Natural killer cell (primary cell): ENCODE measurements at regions of chr19 and their contacts with region 1.

Region 1: DNA sequence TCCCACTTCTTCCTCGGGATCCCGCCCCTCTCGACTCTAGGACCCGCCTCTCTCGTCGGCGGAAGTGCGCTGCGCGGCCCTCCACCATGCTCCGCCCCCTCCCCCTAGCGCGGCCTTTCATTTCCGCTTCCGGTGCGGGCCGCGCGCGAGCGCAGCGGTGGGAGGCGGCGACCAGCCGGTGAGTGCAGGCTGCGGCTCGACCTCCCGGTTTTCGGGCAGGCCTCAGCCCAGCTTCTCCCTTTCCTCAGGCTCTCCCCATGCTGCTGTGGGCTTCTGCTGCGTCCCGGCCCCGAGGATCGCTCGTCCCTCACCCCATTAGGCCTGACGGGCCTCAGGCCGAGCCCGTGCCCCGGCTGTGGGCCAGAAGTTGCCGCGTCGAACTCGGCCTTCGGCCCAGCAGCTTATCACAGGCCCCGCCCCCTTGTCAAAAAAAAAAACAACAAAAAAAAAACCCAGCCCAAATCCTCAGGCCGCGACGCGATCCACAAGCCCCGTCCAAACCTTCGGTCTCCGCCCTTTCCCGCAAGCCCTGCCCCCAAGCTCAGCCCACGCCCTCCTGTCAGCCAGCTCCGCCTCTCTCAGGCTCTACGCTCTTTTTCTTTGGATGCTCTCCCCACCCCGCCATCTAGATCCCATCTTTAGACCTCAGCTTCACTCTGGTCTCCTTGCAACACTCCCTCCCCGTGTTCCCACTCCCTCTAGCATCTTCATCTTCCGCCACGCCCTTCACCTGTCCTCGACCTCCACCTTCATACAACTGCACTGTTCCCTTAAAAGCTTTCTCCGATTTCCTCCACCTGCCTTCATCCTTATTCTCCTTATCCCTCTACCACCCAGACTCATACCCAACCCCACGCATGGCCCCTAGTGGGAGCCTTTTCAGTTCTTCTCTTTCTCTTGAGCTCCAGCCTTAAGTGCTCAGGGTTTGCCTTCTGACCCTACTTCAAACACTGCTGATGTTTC is at the start of gene CLASRP:
- DNase-seq: peak; percentile 89 to 95
- ATAC-seq: peak; percentile 92 to 97 (median 93)
- H3K4me3 ChIP-seq: peak within 1 kb of the TSS; percentile 89
- H3K4me3 Mint-ChIP-seq: peak within 1 kb of the TSS; percentile 95
- H3K27ac ChIP-seq: peak within 1 kb of the TSS; percentile 91
- H3K27ac Mint-ChIP-seq: peak within 1 kb of the TSS; percentile 93 to 95
- H3K4me1 ChIP-seq: peaks cover 38% of the 10 kb centered on the region
- H3K4me1 Mint-ChIP-seq: peaks cover 31 to 36% of the 10 kb centered on the region in 2 donors
- H3K27me3 ChIP-seq: no peaks in the 10 kb centered on the region
- H3K27me3 Mint-ChIP-seq: no peaks in the 10 kb centered on the region
- CTCF ChIP-seq: no peak
- total RNA-seq, gene CLASRP: 142 to 160 (median 146) TPM

Region 2: DNA sequence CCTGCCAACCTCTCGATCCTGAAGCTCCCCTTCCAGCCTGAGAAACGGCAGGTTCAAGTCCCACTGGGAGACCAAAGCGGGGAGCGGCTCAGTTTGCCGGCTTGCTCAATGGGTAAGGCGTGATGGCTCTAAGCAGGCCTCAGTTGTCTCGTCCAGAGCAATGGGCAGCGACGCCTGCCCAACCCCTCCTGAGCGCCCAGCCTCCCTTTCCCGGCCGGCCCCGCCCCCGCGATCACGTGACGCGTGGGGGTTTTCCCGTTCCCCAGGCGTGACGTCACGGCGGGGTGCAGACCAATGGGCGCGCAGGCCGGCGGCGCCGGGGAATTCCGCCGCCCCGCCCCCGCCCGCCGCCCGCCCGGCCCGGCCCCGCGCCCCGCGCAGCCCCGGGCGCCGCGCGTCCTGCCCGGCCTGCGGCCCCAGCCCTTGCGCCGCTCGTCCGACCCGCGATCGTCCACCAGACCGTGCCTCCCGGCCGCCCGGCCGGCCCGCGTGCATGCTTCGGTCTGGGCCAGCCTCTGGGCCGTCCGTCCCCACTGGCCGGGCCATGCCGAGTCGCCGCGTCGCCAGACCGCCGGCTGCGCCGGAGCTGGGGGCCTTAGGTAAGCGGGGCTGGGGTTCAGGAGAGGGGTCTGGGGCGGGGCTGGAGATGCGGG is 38.0 kb before region 1 on chr19 and contains the start of gene RELB:
- intact Hi-C with region 1: loop called (anchors 5 kb)
- DNase-seq: peak; percentile 98 to 99
- ATAC-seq: peak; percentile 56 to 83 (median 69)
- H3K4me3 ChIP-seq: peak within 1 kb of the TSS; percentile 92
- H3K4me3 Mint-ChIP-seq: peak within 1 kb of the TSS; percentile 98
- H3K27ac ChIP-seq: peak within 1 kb of the TSS; percentile 100
- H3K27ac Mint-ChIP-seq: peak within 1 kb of the TSS; percentile 97 to 98
- H3K4me1 ChIP-seq: peaks cover 15% of the 10 kb centered on the region
- H3K4me1 Mint-ChIP-seq: peaks cover 9 to 11% of the 10 kb centered on the region in 2 donors
- H3K27me3 ChIP-seq: no peaks in the 10 kb centered on the region
- H3K27me3 Mint-ChIP-seq: no peaks in the 10 kb centered on the region
- CTCF ChIP-seq: no peak
- total RNA-seq, gene RELB: 92.4 to 119 (median 105) TPM